Cardiac septum (tissue), 1 donor: ENCODE measurements at regions of chr22 and their contacts with region 1.

Region 1: DNA sequence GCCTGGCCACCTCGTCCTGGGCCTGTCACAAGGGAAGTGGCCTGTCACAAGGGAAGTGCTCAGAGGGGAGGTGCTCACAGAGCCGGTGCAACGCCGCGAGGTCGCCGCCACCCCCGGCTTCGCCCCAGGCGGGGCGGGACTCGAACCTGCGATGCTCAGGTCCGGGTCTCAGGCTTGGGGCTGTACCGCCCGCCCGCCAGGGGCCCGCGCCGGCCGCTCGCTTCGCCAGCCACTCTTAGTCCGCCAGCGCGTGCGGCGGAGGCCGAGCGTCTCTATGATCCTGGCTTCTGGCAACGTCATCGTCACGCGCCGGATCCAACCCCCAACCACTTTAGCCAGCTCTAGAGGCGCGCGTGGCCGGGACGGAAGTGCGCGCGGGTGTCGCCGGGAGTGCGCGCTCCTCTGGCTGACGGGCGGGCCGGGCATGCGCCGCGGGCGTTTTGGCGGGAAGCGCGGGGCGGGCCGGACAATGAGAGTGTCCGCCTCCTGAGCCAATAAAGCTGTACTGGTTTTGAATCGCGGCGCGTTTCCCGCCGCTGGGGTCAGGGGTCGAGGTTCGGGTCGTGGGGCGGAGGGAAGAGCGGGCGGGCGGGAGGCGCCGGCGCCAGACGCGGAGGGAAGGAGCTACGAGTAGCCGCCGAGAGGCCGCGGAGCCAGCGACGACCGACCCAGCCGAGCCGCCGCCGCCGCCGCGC is at the start of gene TRMT2A:
- DNase-seq: peak; percentile 98
- total RNA-seq, gene TRMT2A: 24.0 TPM

Region 2: DNA sequence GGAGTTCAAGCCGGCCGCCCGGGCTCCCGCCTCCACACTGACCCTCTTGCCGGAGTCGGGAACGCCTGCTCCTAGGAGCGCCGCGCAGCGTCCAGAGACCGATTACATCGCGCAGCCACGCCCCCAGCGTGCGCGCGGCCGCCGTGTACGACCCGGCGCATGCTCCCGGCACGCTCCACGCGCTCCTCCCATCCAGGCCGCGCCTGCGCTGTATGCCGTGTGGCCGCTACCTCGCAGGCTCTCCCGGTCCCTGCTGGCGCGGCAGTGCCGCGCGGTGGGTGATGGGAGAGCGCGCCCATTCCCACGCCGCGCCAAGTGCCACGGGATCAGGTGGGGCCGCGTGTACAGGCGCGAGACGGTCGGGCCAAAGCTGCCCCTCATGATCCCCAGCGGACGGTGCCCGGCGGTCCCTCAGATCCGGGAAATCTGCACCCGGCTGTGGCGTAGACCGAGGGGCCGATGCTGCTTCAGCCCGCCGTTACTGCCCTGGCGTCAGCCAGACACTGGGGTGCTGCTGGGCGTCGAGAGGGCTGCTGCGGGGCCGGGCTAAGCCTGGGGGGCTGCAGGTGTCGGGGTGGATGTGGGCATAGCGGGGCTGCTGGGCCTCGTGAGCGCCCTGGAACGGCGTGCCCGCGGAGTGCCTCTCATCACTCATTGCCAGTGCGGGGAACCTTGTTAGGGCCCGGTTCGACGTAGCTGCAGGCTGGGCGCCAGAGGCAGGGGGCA is 262.2 kb before region 1 on chr22 and contains the starts of genes GNB1L and RTL10:
- intact Hi-C with region 1: loop called (anchors 10 kb)
- DNase-seq: peak; percentile 99
- total RNA-seq, gene GNB1L: 2.0 TPM
- total RNA-seq, gene RTL10: 6.3 TPM

Region 3: GRCh38 chr22:20079745-20080444 is 37.2 kb before region 1 on chr22 and contains the start of gene DGCR8:
- intact Hi-C with region 1: loop called (anchors 1 kb)
- DNase-seq: peak; percentile 97
- total RNA-seq, gene DGCR8: 19.1 TPM